ENCODE measurements at regions of chr2 and their contacts with region 1.

Region 1: DNA sequence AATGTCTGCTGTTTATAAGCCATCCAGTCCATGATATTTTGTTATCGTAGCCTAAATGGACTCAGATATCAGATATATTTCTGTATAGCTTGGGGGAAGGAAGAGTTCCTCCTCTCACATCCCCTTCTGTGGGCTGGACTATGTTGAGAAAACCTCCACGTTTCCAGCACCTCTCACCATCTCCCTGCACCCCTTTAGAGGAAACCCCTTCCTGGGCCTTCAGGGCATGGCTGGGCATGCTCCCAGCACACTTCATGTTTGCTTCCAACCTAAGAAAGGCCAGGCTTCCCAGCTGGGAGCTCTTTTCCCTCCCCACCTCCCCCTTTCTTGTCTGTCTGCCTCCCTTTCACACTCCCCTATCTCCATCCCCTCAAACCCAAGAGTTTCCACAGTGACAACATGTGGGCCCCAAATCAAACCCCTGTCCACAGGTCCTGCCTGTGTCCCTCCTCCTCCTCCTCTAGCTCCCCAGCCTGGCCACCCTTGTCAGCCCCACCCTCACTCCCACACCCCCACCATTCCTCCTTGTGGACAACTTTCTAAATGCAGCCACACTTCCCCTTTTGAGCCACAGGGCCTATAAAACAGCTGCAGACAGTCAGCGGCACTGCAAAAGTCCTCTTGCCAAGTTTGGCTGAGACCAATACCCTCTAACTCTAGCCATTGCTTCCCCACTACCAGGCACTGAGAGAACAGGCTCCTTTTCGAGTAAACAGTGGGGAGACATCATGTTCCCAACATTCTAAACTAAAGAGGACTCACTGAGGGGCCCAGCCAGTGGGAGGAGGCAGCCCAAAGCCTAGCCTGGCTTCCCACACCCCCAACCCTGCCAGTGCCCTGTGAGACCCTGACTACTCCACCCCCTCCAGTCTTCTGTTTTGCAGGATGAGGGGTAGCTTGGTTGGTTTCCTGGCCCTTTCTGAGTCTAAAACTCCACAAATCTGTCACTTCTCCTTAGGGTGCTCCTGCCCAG is 120.5 kb downstream of the ZFP36L2 start:
- DNase-seq: no peak
- H3K4me3 ChIP-seq: no peak overlapping the region
- CTCF ChIP-seq: peak; percentile 30

Region 2: DNA sequence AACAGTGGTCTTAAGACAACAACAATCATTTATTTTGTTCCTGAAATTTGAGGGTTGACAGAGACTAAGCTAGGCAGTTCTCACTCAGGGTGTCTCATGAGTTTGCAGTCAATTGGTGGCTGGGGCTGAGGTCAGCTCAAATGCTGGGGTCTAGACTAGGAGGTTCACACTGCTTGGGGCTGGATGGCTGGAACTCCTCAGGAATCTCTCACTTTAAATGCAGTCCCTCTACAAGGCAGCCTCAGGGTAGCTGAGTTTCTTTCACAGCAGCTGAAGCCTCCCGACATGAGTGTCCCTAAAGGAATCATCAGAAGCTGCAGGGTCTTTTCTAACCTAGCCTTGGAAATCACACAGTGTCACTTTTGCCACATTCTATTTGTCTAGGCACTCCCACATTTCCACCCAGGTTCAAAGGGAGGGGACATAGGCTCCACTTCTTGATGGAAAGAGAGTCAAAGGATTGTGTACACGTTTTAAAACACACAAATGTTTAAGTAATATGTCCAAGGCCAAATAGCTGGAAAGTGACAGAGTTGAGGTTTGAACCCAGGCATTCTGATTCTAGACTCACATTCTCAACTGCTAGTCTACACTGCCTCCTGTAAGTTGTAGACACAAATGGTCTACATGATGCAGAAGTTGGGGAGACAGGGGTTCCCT is 13.2 kb before region 1 on chr2:
- CTCF ChIA-PET with region 1: interaction called, 16 read pairs
- POLR2A ChIA-PET with region 1: no interaction called
- DNase-seq: no peak
- H3K4me3 ChIP-seq: no peak overlapping the region
- CTCF ChIP-seq: no peak

Measured in AG04449 (cell line).